ENCODE measurements at regions of chr6 and their contacts with region 1.

Region 1: GRCh38 chr6:73585566-73586415 is 65.0 kb upstream of the EEF1A1 start:
- DNase-seq: peak; percentile 83
- ATAC-seq: peak; percentile 76
- H3K4me3 ChIP-seq: peak overlapping the region; percentile 17 to 65 (median 36)
- H3K4me3 Mint-ChIP-seq: peak overlapping the region; percentile 83
- H3K27ac ChIP-seq: peak overlapping the region; percentile 93 to 98
- H3K27ac Mint-ChIP-seq: peak overlapping the region; percentile 99
- H3K4me1 ChIP-seq: peaks cover 21 to 33% of the 10 kb centered on the region in 2 donors
- H3K4me1 Mint-ChIP-seq: peaks cover 19% of the 10 kb centered on the region
- H3K27me3 ChIP-seq: no peaks in the 10 kb centered on the region
- H3K27me3 Mint-ChIP-seq: no peaks in the 10 kb centered on the region
- CTCF ChIP-seq: no peak

Region 2: DNA sequence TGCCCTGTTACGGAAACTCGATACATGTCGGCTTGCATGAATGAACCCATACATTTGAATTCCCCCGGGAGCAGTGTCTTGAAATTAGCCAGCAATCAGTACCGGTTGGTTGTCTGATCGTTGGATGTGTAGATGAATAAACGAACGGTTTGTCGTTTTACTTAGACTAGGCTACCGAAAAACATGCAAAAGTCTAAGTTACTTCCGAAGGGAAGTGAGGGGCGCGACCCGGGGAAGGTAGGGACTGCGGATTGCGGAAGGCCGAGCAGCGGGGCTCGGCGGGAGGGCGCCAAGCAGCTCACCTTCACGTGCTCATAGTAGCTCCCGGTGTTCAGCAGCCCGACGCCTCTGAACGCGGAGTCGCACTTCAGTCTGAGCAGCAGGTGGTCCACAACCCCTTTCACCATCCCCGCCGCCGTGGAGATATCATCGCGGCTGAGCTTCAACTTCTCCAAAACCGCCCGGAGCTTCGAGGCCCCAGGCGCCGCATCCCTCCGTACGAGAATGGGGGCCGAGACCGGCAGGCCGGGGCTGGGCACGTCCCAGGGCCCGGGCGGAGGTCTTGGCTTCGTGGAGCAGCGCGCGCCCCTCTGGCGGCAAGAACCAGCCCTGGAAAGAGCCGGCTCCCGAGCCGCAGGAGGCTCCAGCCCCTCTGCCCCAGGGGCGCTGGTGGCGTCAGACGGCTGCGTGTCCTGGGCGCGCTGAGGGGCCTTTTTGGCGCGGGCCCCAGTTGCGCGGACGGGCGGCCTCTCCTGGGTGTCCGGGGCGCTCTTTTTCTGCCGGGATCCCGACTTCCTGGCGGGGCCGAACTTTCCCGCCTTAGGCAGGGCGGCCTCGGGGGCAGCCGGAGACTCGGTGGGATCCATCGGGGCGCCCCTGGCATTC is 134.3 kb before region 1 on chr6:
- CTCF ChIA-PET with region 1: no interaction called
- POLR2A ChIA-PET with region 1: interaction called, 7 read pairs
- intact Hi-C with region 1: loop called (anchors 5 kb)
- DNase-seq: peak; percentile 82
- ATAC-seq: peak; percentile 56
- H3K4me3 ChIP-seq: peak overlapping the region; percentile 86 to 94 (median 91)
- H3K4me3 Mint-ChIP-seq: peak overlapping the region; percentile 95
- H3K27ac ChIP-seq: peak overlapping the region; percentile 87 to 89
- H3K27ac Mint-ChIP-seq: peak overlapping the region; percentile 91
- H3K4me1 ChIP-seq: peaks cover 16 to 25% of the 10 kb centered on the region in 2 donors
- H3K4me1 Mint-ChIP-seq: peaks cover 23% of the 10 kb centered on the region
- H3K27me3 ChIP-seq: no peaks in the 10 kb centered on the region
- H3K27me3 Mint-ChIP-seq: no peaks in the 10 kb centered on the region
- CTCF ChIP-seq: no peak

Region 3: GRCh38 chr6:73566954-73567591 is 18.7 kb before region 1 on chr6:
- CTCF ChIA-PET with region 1: interaction called, 9 read pairs
- POLR2A ChIA-PET with region 1: interaction called, 10 read pairs
- intact Hi-C with region 1: no loop called
- DNase-seq: no peak
- ATAC-seq: no peak
- H3K4me3 ChIP-seq: no peak overlapping the region
- H3K4me3 Mint-ChIP-seq: no peak overlapping the region
- H3K27ac ChIP-seq: no peak overlapping the region
- H3K27ac Mint-ChIP-seq: no peak overlapping the region
- H3K4me1 ChIP-seq: no peaks in the 10 kb centered on the region
- H3K4me1 Mint-ChIP-seq: peaks cover 5% of the 10 kb centered on the region
- H3K27me3 ChIP-seq: no peaks in the 10 kb centered on the region
- H3K27me3 Mint-ChIP-seq: no peaks in the 10 kb centered on the region
- CTCF ChIP-seq: no peak

Region 4: DNA sequence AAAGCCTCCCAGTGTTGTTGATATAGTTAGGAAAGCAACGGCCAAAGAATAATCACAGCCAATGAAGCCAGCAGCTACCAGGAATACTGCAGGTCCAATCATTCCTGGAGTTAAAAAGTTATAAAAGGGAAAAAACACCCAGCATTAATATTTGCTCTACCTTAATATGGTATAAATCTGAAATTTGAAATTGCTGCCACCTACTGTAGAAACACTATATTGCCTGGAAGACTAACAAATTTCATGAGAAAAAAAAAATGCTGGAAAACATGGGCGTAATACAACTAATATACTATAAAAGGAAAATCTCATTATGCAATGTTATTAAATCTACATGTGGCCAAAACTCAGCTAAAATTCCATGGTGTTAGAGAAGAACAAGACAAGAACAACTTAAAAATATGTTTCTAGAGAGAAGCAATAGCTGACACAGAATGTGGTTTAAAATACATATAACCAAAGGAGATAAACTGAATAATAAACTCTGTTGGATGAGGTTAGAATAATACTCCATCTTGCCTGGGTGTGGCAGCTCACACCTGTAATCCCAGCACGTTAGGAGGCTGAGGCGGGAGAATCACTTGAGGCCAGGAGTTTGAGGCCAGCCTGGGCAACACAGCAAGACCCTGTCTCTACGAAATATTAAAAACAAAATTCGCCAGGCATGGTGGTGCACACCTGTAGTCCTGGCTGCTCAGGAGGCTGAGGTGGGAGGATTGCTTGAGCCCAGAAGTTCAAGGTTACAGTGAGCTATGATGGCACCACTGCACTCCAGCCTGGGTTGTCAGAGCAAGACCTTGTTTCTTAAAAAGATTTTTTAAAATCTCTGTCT is 24.9 kb after region 1 on chr6:
- CTCF ChIA-PET with region 1: interaction called, 20 read pairs
- POLR2A ChIA-PET with region 1: interaction called, 11 read pairs
- intact Hi-C with region 1: no loop called
- DNase-seq: peak; percentile 73
- ATAC-seq: peak; percentile 63
- H3K4me3 ChIP-seq: no peak overlapping the region
- H3K4me3 Mint-ChIP-seq: no peak overlapping the region
- H3K27ac ChIP-seq: no peak overlapping the region
- H3K27ac Mint-ChIP-seq: no peak overlapping the region
- H3K4me1 ChIP-seq: peaks cover 0 to 5% of the 10 kb centered on the region in 2 donors
- H3K4me1 Mint-ChIP-seq: peaks cover 5% of the 10 kb centered on the region
- H3K27me3 ChIP-seq: no peaks in the 10 kb centered on the region
- H3K27me3 Mint-ChIP-seq: no peaks in the 10 kb centered on the region
- CTCF ChIP-seq: peak; percentile 81

Measured in B cell (primary cell).